Heart left ventricle (tissue), 16 donors: ENCODE measurements at regions of chr7 and their contacts with region 1.

Region 1: GRCh38 chr7:131546583-131547111 is 9.8 kb downstream of the PODXL start:
- DNase-seq: no peak
- ATAC-seq: no peak
- H3K4me3 ChIP-seq: peak overlapping the region in 1 of 12 donors; percentile 0
- H3K27ac ChIP-seq: peak overlapping the region in 6 of 12 donors; percentile 65 to 91 (median 86)
- H3K4me1 ChIP-seq: peaks cover 0 to 80% (median 47%) of the 10 kb centered on the region in 12 donors
- H3K27me3 ChIP-seq: no peaks in the 10 kb centered on the region
- CTCF ChIP-seq: peak; percentile 42 to 71 (median 53)
- POLR2A ChIP-seq: no peak

Region 2: GRCh38 chr7:131507592-131508331 is 38.9 kb before region 1 on chr7:
- intact Hi-C with region 1: loop called in 7 of 10 experiments (anchors 2 to 10 kb)
- DNase-seq: peak; percentile 82 to 92 (median 84)
- ATAC-seq: peak; percentile 54 to 72 (median 66)
- H3K4me3 ChIP-seq: peak overlapping the region in 3 of 12 donors; percentile 10 to 19 (median 10)
- H3K27ac ChIP-seq: peak overlapping the region in 6 of 12 donors; percentile 21 to 59 (median 27)
- H3K4me1 ChIP-seq: peaks cover 10 to 63% (median 45%) of the 10 kb centered on the region in 12 donors
- H3K27me3 ChIP-seq: no peaks in the 10 kb centered on the region
- CTCF ChIP-seq: peak; percentile 90 to 98 (median 94)
- POLR2A ChIP-seq: no peak

Region 3: DNA sequence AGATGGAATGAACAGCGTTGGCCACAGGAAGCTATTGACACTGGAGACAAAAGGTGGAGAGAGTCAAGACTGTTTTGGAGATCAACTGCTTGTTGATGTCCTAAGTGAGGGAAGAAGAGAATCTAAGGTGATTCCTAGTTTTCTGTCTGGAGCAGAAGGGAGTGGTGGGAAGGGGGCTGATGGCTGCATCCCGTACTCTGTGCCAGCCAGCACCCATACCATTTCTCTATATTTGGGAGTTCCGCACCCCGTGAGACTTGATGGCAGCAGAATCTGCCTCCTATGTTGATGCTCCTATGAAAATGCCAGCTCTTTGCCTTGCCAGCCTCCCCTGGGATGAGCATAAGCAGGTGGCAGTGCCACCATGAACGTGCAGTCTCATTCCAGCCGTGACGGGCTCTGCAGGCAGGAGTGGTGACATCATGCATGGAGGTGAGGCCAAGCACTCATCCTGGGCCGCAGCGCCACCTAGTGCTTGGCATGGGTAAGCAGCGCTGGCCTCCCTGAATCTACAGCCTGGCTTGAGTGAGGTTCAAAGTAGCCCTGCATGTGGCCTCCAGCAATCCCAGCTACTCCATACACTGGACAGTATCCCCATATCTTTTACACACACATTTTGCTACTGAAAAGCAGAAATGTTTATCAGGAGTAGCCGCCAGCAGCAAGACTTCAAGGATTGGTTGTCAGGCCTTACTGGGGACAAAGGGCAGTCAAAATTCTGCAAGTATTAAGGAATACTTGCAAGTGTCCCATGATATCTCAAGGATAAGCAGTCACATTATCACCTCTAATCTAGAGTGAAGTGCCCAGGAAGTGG is 33.2 kb before region 1 on chr7:
- intact Hi-C with region 1: loop called in 7 of 10 experiments (anchors 2 to 10 kb)
- DNase-seq: peak; percentile 85 to 91 (median 88)
- ATAC-seq: peak; percentile 83 to 93 (median 90)
- H3K4me3 ChIP-seq: no peak overlapping the region
- H3K27ac ChIP-seq: peak overlapping the region; percentile 7 to 77 (median 45)
- H3K4me1 ChIP-seq: peaks cover 0 to 59% (median 37%) of the 10 kb centered on the region in 12 donors
- H3K27me3 ChIP-seq: no peaks in the 10 kb centered on the region
- CTCF ChIP-seq: peak; percentile 92 to 99 (median 95)
- POLR2A ChIP-seq: no peak

Region 4: DNA sequence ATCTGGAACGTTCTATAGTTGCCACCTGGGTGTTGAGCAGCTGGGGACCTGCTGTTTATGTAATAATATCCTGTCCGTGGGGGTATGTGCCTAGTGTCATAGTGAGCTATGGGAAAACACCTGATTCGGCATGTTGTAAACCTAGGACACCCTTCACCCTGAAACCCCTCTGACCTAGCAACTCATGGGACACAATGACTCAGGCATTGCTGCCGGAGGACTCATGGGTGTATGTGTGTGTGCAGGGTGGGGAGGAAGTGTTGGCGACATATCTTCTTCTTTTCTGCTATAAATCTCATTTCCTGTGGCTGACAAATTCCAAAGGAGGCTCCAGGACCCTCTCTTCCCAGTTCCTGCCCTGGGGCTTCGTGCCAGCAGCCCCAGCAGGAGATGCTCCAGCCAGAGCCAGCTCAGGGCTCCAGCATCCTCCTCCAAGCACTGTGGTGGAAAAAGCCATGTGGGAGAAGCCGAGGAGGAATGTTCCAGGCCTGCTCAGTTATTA is 86.7 kb after region 1 on chr7:
- intact Hi-C with region 1: loop called in 2 of 10 experiments (anchors 5 kb)
- DNase-seq: peak in 1 of 5 donors; percentile 54
- ATAC-seq: peak in 3 of 4 donors; percentile 32 to 46 (median 40)
- H3K4me3 ChIP-seq: no peak overlapping the region
- H3K27ac ChIP-seq: peak overlapping the region in 9 of 12 donors; percentile 25 to 79 (median 60)
- H3K4me1 ChIP-seq: peaks cover 6 to 62% (median 35%) of the 10 kb centered on the region in 12 donors
- H3K27me3 ChIP-seq: no peaks in the 10 kb centered on the region
- CTCF ChIP-seq: no peak
- POLR2A ChIP-seq: no peak

Region 5: DNA sequence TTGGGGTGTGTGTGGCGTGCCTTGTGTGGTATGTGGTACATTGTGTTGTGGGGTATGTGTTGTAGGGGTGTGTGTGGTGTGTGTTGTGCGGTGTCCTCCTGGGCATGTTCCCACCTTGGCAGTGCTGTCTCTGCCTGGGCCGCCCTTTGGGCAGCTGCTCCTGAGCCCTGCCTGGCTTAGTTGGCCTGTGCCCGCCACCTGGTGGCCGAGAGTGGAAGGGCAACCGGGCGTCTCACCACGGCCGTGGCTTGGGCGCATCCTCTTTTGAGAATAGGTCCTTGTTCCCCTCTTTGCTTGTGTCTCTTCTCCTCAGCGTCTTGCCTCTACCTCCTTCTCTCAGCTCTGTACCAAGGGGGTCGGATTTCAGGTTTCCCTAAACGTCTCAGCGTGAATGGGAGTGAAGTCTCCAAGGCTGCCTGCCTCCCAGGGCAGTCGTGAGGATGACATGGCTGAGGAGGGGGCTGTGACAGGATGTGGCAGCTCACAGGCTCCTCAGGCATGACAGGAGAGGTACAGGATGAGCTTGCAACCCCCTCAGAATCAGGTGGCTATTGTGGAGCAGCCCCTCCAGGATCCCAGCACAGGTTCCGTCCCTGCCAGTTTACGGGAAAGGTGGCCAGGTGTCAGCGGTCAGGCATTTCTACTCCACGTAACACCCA is 108.2 kb after region 1 on chr7:
- intact Hi-C with region 1: loop called in 8 of 10 experiments (anchors 2 to 5 kb)
- DNase-seq: peak; percentile 85 to 92 (median 89)
- ATAC-seq: peak; percentile 82 to 89 (median 86)
- H3K4me3 ChIP-seq: no peak overlapping the region
- H3K27ac ChIP-seq: no peak overlapping the region
- H3K4me1 ChIP-seq: peaks cover 0 to 23% (median 8%) of the 10 kb centered on the region in 12 donors
- H3K27me3 ChIP-seq: no peaks in the 10 kb centered on the region
- CTCF ChIP-seq: peak; percentile 84 to 94 (median 88)
- POLR2A ChIP-seq: no peak